ENCODE measurements at regions of chr12 and their contacts with region 1.

Region 1: DNA sequence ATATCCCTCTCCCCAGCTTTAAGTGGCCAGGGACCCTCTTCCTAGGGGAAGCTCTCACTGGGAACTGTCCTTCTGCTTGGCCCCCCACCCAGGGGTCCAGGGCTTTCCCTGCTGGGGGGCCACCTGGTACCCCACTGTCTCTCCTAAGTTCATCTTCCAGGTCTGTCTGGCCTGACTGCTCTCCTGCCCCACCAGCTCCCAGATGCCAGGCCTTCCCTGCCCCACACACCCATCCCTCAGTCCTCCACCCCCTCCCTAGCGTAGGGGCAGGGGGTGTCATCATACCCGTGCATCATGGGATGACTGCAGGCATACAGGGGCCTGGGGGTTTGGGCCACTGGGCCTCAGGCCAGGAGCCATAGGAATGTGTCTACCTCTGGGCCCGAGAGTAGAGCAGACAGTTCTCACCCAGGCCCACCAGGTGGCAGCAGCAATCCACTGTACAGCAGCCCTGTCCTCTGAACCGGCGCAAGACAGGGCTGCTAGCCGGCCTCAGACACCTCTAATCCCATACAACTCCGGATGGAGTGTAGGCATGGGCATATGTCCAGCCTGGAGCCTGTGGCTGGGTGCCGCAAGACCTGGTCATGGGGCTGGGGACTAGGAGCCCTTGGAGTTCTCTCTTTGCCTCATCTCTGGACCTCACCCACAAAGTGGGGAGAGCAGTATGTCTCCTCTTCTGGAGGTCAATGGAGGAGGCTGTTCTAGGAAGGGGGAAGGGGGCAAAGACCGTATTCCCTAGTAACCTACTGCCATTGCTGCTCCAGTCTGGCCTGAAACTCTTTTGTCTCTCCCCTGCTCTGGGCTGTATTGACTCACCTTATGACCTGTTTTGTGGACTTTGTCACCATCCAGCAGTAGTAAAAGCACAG is 10.0 kb upstream of the SMARCD1 start:
- DNase-seq: peak; percentile 71 to 79 (median 72)
- H3K4me3 ChIP-seq: no peak overlapping the region
- H3K27ac ChIP-seq: no peak overlapping the region
- H3K4me1 ChIP-seq: peaks cover 0 to 19% (median 0%) of the 10 kb centered on the region in 4 experiments
- H3K27me3 ChIP-seq: peaks cover 0 to 6% (median 3%) of the 10 kb centered on the region in 5 experiments

Region 2: GRCh38 chr12:49347384-49348237 is 727.6 kb before region 1 on chr12:
- CTCF ChIA-PET with region 1: no interaction called
- POLR2A ChIA-PET with region 1: no interaction called
- DNase-seq: peak; percentile 54 to 69 (median 69)
- H3K4me3 ChIP-seq: peak overlapping the region in 5 of 7 experiments; percentile 22 to 66 (median 34)
- H3K27ac ChIP-seq: no peak overlapping the region
- H3K4me1 ChIP-seq: peaks cover 0 to 49% (median 38%) of the 10 kb centered on the region in 4 experiments
- H3K27me3 ChIP-seq: peaks cover 4 to 81% (median 48%) of the 10 kb centered on the region in 5 experiments

Region 3: DNA sequence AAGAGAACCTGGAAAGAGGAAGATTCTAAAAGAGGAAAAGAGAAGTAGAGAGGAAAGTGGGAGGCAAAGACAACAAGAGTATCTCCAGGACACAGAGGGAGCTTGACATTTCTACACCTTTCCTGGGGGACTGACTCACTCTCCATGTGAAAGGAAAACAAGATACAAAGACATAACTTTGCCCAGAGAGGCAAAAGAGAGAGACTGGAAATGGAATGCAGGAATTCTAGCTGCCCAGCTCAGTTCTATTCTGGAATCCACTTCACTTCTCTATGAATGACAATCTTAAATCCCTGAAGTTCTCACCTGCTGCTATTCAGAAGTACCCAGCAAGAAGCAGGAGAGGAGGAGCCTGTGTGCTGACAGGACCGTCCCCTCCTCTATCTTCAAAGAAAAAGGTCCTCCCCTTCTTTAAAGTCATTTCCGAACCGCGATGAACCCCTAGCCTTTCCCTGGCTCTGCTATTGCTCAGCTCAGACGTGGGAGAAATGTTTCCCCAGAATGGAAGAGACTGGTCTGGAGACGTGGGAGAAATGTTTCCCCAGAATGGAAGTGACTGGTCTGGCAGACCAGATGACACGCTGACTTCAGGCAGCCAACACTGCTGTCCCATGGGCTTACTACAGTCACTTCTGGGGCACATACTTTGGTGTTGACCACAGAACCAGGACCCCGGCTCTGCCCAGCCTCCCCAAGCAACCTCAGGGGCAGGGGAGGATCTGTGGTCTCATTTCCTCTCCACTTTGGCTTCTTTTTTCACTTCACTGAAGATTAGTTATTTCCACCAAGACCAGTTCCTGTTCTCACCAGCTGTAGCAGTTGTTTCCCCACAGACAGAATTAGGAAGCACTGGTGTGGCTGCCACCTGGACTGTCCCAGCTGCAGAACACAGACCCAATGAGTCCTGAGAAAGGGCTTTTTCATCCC is 376.3 kb before region 1 on chr12:
- CTCF ChIA-PET with region 1: no interaction called
- POLR2A ChIA-PET with region 1: no interaction called
- DNase-seq: peak; percentile 64 to 93 (median 89)
- H3K4me3 ChIP-seq: peak overlapping the region in 5 of 7 experiments; percentile 17 to 56 (median 42)
- H3K27ac ChIP-seq: no peak overlapping the region
- H3K4me1 ChIP-seq: peaks cover 26 to 38% (median 29%) of the 10 kb centered on the region in 4 experiments
- H3K27me3 ChIP-seq: peaks cover 0 to 3% (median 0%) of the 10 kb centered on the region in 5 experiments

Region 4: DNA sequence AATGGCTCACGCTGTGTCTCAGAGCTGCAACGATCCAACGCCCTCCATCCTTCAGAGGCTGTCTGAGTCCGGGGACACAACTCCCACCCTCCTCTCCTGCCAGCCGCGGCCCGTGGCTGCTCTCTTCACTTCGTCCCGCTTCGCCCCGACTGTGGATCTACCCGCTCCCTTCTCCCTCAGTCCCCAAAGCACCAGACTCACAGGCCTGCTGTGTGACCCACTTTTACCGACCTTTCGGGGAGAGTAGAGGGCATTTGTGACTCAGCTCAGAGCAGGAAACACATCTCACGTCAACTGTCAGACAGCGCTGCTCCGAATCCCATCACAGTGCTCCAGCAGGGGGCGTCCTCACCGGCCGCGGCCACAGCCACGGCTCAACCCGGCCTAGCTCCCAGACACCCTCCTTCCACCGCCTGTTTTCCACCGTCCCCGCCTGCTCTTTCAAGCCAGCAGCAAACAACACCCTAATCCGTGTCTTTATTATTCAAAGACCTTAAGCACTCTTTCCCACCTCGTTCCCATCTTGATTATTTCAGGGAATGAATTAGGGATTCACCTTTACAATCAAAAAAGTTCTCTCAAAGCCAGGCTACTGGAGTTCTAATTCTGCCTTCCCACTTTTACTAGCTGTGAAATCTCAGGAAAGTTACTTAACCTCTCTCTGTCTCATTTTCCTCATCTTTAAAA is 129.6 kb before region 1 on chr12:
- CTCF ChIA-PET with region 1: interaction called, 11 read pairs
- POLR2A ChIA-PET with region 1: no interaction called
- DNase-seq: peak; percentile 71 to 79 (median 78)
- H3K4me3 ChIP-seq: peak overlapping the region in 4 of 7 experiments; percentile 21 to 64 (median 57)
- H3K27ac ChIP-seq: no peak overlapping the region
- H3K4me1 ChIP-seq: peaks cover 2 to 6% (median 3%) of the 10 kb centered on the region in 4 experiments
- H3K27me3 ChIP-seq: peaks cover 0 to 63% (median 20%) of the 10 kb centered on the region in 5 experiments

Region 5: GRCh38 chr12:50032639-50033581 is 42.3 kb before region 1 on chr12:
- CTCF ChIA-PET with region 1: interaction called, 269 read pairs
- POLR2A ChIA-PET with region 1: no interaction called
- DNase-seq: peak in 2 of 3 donors; percentile 67 to 74
- H3K4me3 ChIP-seq: peak overlapping the region; percentile 39 to 82 (median 61)
- H3K27ac ChIP-seq: no peak overlapping the region
- H3K4me1 ChIP-seq: peaks cover 0 to 18% (median 14%) of the 10 kb centered on the region in 4 experiments
- H3K27me3 ChIP-seq: no peaks in the 10 kb centered on the region

Region 6: DNA sequence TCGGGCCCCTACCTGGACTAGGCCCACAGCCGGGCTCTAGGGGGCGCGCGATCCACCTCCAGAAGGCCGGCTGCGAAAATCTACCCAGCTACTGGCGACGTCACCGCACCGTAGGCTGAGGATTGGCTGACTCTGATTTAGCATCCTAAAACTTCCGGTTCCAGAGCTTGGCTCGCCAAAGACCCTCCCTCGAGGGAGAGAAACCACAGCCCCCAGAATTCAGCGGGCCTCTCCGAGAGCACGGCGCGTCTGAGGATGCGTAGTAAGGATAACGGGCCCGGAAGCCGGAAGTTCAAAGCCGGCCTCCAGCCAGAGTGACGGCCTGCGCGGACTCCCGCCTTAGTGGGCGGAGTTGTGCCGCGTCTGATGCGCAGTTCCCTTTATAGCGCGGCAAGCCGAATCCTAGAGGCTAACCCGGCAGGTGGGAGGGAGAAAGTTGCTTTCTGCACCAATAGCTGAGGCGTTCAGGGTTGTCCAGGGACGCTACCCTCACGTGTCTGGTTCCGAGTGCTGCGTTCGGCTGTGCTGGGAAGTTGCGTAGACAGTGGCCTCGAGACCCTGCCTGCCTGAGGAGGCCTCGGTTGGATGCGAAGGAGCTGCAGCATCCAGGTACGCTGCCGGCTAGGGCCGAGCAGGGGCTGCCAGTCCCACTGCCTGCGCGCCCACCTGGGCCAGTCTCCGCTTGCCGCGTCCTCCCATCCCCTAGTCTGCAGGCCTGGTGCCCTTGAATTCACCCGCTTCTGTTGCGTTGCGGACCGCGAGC is 36.7 kb after region 1 on chr12 and contains the start of gene COX14:
- CTCF ChIA-PET with region 1: interaction called, 33 read pairs
- POLR2A ChIA-PET with region 1: no interaction called
- DNase-seq: peak; percentile 100
- H3K4me3 ChIP-seq: peak within 1 kb of the TSS; percentile 67 to 100 (median 88)
- H3K27ac ChIP-seq: peak within 1 kb of the TSS; percentile 68 to 95
- H3K4me1 ChIP-seq: peaks cover 0 to 29% (median 17%) of the 10 kb centered on the region in 4 experiments
- H3K27me3 ChIP-seq: no peaks in the 10 kb centered on the region

Region 7: GRCh38 chr12:50123203-50123602 is 48.0 kb after region 1 on chr12:
- CTCF ChIA-PET with region 1: no interaction called
- POLR2A ChIA-PET with region 1: no interaction called
- DNase-seq: no peak
- H3K4me3 ChIP-seq: no peak overlapping the region
- H3K27ac ChIP-seq: no peak overlapping the region
- H3K4me1 ChIP-seq: peaks cover 0 to 10% (median 7%) of the 10 kb centered on the region in 4 experiments
- H3K27me3 ChIP-seq: no peaks in the 10 kb centered on the region

Region 8: DNA sequence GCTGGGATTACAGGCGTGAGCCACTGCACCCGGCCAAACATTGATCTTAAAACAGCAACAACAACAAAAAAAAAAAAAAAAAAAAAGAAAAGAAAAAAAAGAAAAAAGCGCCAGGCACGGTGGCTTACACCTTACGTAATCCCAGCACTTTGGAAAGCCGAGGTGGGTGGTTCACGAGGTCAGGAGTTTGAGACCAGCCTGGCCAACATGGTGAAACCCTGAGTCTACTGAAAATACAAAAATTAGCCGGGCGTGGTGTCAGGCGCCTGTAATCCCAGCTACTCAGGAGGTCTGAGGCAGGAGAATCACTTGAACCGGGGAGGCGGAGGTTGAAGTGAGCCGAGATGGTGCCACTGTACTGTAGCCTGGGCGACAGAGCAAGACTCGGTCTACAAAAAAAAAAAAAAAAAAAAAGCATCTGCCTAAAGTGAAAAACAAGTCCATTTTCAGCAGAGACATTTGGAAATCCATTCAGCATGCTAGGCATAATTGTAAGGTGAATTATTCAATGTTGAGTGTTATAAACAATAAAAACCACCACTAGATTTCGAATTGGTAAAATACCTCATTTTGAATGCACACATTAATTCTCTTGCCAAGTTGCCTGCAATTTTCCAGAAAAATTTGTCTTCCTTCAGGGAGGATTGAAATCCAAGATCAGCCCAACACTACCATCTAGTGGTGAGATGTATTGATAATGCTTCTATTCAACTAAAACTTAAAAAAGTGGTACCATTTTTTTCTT is 100.0 kb after region 1 on chr12:
- CTCF ChIA-PET with region 1: interaction called, 27 read pairs
- POLR2A ChIA-PET with region 1: no interaction called
- DNase-seq: peak; percentile 78 to 84 (median 79)
- H3K4me3 ChIP-seq: no peak overlapping the region
- H3K27ac ChIP-seq: no peak overlapping the region
- H3K4me1 ChIP-seq: no peaks in the 10 kb centered on the region
- H3K27me3 ChIP-seq: no peaks in the 10 kb centered on the region